Endothelial cell of umbilical vein (primary cell): ENCODE measurements at regions of chr1 and their contacts with region 1.

Region 1: GRCh38 chr1:234987415-234988154 is 141.1 kb downstream of the TOMM20 start:
- DNase-seq: peak; percentile 98
- H3K4me3 ChIP-seq: no peak overlapping the region
- H3K27ac ChIP-seq: peak overlapping the region; percentile 100
- H3K4me1 ChIP-seq: peaks cover 47% of the 10 kb centered on the region
- H3K27me3 ChIP-seq: no peaks in the 10 kb centered on the region
- CTCF ChIP-seq: no peak
- POLR2A ChIP-seq: no peak

Region 2: GRCh38 chr1:234631721-234632125 is 355.9 kb before region 1 on chr1:
- CTCF ChIA-PET with region 1: no interaction called
- POLR2A ChIA-PET with region 1: no interaction called
- dilution Hi-C with region 1: no loop called
- intact Hi-C with region 1: loop called (anchors 1 kb)
- DNase-seq: peak; percentile 98
- H3K4me3 ChIP-seq: no peak overlapping the region
- H3K27ac ChIP-seq: peak overlapping the region; percentile 95
- H3K4me1 ChIP-seq: peaks cover 38% of the 10 kb centered on the region
- H3K27me3 ChIP-seq: no peaks in the 10 kb centered on the region
- CTCF ChIP-seq: no peak
- POLR2A ChIP-seq: no peak

Region 3: GRCh38 chr1:234772345-234773147 is 215.0 kb before region 1 on chr1:
- CTCF ChIA-PET with region 1: no interaction called
- POLR2A ChIA-PET with region 1: no interaction called
- dilution Hi-C with region 1: no loop called
- intact Hi-C with region 1: loop called (anchors 1 kb)
- DNase-seq: peak; percentile 91
- H3K4me3 ChIP-seq: no peak overlapping the region
- H3K27ac ChIP-seq: peak overlapping the region; percentile 89
- H3K4me1 ChIP-seq: peaks cover 12% of the 10 kb centered on the region
- H3K27me3 ChIP-seq: peaks cover 2% of the 10 kb centered on the region in 2 experiments
- CTCF ChIP-seq: no peak
- POLR2A ChIP-seq: peak; percentile 62

Region 4: DNA sequence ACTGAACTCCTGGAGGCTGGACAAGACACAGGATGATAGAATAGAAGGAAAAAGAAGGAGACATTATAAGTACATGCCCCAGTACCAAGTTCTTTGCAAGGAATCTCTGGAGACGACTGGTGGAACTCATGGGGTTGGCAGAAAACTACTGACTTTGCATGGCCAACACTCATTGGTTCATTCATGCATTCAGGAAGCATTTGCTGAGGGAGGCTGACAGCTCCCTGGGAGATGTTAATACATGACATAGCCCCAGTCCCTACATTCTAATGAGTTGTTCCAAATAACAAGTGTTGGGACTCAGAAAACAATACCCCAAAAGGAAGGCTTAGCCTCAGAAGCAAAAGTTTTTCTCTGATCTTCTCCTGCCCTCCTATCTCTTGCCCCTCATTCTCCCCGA is 204.8 kb before region 1 on chr1:
- CTCF ChIA-PET with region 1: no interaction called
- POLR2A ChIA-PET with region 1: no interaction called
- dilution Hi-C with region 1: no loop called
- intact Hi-C with region 1: no loop called
- DNase-seq: peak; percentile 24
- H3K4me3 ChIP-seq: no peak overlapping the region
- H3K27ac ChIP-seq: no peak overlapping the region
- H3K4me1 ChIP-seq: no peaks in the 10 kb centered on the region
- H3K27me3 ChIP-seq: peaks cover 0 to 16% of the 10 kb centered on the region in 2 experiments
- CTCF ChIP-seq: no peak
- POLR2A ChIP-seq: no peak

Region 5: GRCh38 chr1:234893725-234894630 is 93.6 kb before region 1 on chr1:
- CTCF ChIA-PET with region 1: no interaction called
- POLR2A ChIA-PET with region 1: no interaction called
- dilution Hi-C with region 1: no loop called
- intact Hi-C with region 1: loop called (anchors 1 kb)
- DNase-seq: peak; percentile 98
- H3K4me3 ChIP-seq: no peak overlapping the region
- H3K27ac ChIP-seq: peak overlapping the region; percentile 93
- H3K4me1 ChIP-seq: peaks cover 20% of the 10 kb centered on the region
- H3K27me3 ChIP-seq: no peaks in the 10 kb centered on the region
- CTCF ChIP-seq: no peak
- POLR2A ChIP-seq: no peak

Region 6: GRCh38 chr1:235011599-235012435 is 24.2 kb after region 1 on chr1:
- CTCF ChIA-PET with region 1: interaction called, 5 read pairs
- POLR2A ChIA-PET with region 1: no interaction called
- dilution Hi-C with region 1: no loop called
- intact Hi-C with region 1: loop called (anchors 1 kb)
- DNase-seq: peak; percentile 64
- H3K4me3 ChIP-seq: no peak overlapping the region
- H3K27ac ChIP-seq: peak overlapping the region; percentile 82
- H3K4me1 ChIP-seq: peaks cover 29% of the 10 kb centered on the region
- H3K27me3 ChIP-seq: no peaks in the 10 kb centered on the region
- CTCF ChIP-seq: no peak
- POLR2A ChIP-seq: no peak

Region 7: DNA sequence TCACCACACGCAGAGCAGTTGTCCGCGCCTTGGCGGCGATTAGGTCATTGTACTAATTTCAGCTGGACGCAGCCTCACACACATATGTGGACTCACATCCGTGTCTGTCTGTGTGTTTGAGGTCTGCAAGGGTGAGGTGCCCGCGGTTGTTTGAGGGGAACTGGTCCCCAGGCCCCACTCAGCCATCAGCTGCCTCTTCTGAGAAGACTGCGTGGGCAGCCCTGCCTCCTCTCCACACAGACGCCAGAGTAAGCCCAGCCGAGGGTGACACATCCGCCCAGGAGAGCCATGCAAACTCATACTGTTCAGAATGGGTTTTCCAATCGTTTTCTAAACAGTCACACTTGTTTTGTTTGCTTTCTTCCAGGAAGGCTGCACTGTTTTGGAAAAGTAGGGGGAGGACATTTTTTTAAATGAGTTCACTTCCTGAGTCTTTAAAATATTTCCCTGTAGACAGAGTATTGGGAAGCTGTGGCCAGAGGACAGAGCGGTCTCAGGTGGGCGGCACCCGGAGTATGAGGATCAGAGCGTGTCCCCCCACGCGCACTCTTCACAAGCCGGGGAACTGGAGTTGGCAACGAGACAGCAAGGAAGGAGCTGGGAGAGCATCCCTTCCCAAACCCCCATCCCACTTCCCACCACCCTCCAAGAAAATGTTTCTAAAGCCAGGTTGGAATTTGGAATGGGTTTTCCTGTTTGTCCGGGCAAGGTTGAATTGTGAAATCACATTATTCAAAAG is 87.8 kb after region 1 on chr1:
- CTCF ChIA-PET with region 1: interaction called, 4 read pairs
- POLR2A ChIA-PET with region 1: no interaction called
- dilution Hi-C with region 1: no loop called
- intact Hi-C with region 1: loop called (anchors 1 kb)
- DNase-seq: peak; percentile 92
- H3K4me3 ChIP-seq: no peak overlapping the region
- H3K27ac ChIP-seq: peak overlapping the region; percentile 95
- H3K4me1 ChIP-seq: peaks cover 33% of the 10 kb centered on the region
- H3K27me3 ChIP-seq: no peaks in the 10 kb centered on the region
- CTCF ChIP-seq: no peak
- POLR2A ChIP-seq: peak; percentile 58